Sigmoid colon (tissue), 7 donors: ENCODE measurements at regions of chr22 and their contacts with region 1.

Region 1: DNA sequence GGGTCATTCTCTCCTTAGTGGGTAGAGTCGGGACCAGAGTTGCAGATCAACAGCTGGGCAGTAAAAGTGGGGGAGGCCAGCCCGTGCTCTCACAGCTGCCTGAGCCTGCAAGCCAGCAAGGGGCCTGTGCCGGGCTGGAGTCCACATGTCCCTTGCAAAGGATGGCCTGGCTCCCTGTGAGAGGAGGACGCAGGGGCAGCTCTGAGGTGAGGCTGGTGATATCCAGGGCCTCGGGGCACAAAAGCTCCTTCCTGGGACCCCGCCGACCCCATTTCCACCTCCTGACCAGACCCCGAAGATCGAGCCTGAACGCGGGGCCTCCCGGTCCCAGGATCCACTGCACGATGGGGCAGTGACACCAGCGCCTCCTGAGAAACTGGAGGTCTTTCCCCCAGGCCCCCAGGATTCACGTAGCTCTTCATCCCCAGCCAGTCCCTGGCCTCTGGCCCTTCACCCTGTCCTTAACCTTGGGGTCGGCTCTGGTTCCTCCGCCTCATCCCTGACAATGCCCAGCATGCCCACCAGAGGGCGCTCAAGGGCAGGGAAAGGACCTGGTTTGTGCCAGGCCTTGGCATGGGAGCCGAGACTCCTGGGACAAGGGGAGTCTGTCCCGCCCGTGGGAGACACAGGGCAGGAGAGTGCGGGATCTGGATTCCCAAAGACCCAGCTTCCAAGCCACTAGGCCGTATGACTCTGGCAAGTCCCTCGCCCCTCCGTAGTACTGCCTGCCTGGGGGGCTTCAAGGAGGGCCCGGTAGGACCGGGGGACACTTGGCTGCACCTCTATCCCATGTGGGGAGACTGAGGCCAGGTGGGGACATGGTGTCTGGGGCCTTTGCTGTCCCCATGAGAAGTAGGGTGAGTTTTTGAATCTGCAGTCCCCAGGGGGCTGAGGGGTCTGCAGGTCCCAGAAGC is 17.8 kb upstream of the WNT7B start:
- DNase-seq: peak; percentile 91
- H3K4me3 ChIP-seq: no peak overlapping the region
- H3K27ac ChIP-seq: peak overlapping the region in 2 of 4 donors; percentile 85
- H3K4me1 ChIP-seq: peaks cover 0 to 50% (median 47%) of the 10 kb centered on the region in 4 donors
- H3K27me3 ChIP-seq: no peaks in the 10 kb centered on the region
- CTCF ChIP-seq: peak; percentile 95 to 99 (median 97)
- EP300 ChIP-seq: no peak
- POLR2A ChIP-seq: no peak

Region 2: DNA sequence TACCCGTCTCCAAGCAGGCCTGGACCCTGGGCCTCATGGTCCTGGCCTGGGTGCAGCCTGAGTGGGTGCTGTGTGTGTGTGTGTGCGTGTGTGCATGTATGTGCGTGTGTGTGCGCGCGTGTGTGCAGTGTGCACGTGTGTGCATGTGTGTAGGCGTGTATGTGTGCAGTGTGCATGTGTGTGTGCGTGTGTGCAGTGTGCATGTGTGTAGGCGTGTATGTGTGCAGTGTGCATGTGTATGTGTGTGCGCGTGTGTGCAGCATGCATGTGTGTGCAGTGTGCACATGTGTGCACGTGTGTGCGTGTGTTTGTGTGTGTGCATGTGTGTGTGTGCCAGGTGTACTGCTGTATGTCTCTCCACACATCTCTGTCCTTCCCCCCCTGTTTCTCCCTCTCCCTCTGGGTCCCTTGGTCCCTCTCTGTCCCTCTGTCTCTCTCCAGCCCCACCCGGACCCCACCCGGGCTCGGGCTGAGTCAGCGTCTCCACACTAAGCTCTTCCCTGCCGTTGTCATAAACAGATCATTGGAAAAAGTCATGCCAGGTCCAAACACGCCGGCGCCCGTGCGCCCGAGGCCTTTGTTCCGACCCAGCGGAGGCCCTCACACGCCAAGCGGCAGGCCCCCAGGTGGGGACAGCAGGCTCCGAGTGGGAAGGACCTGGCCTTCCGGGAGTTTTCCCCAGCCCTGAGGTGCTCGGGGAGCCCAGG is 51.8 kb before region 1 on chr22:
- intact Hi-C with region 1: no loop called
- DNase-seq: no peak
- H3K4me3 ChIP-seq: no peak overlapping the region
- H3K27ac ChIP-seq: no peak overlapping the region
- H3K4me1 ChIP-seq: no peaks in the 10 kb centered on the region
- H3K27me3 ChIP-seq: no peaks in the 10 kb centered on the region
- CTCF ChIP-seq: no peak
- EP300 ChIP-seq: no peak
- POLR2A ChIP-seq: no peak

Region 3: GRCh38 chr22:46296257-46297150 is 301.8 kb after region 1 on chr22 and contains the start of gene GTSE1:
- intact Hi-C with region 1: loop called (anchors 5 kb)
- DNase-seq: peak; percentile 99
- H3K4me3 ChIP-seq: peak within 1 kb of the TSS; percentile 35 to 62 (median 56)
- H3K27ac ChIP-seq: peak within 1 kb of the TSS; percentile 89 to 96 (median 94)
- H3K4me1 ChIP-seq: peaks cover 0 to 19% (median 16%) of the 10 kb centered on the region in 4 donors
- H3K27me3 ChIP-seq: no peaks in the 10 kb centered on the region
- CTCF ChIP-seq: no peak
- EP300 ChIP-seq: no peak
- POLR2A ChIP-seq: peak in 1 of 2 donors; percentile 33
- total RNA-seq, gene GTSE1: 0.27 to 0.36 (median 0.28) TPM in 3 of 4 donors, not detected in the other

Region 4: GRCh38 chr22:46317646-46318045 is 322.9 kb after region 1 on chr22:
- intact Hi-C with region 1: loop called (anchors 5 kb)
- DNase-seq: no peak
- H3K4me3 ChIP-seq: no peak overlapping the region
- H3K27ac ChIP-seq: no peak overlapping the region
- H3K4me1 ChIP-seq: no peaks in the 10 kb centered on the region
- H3K27me3 ChIP-seq: no peaks in the 10 kb centered on the region
- CTCF ChIP-seq: no peak
- EP300 ChIP-seq: no peak
- POLR2A ChIP-seq: no peak

Region 5: GRCh38 chr22:46542011-46542985 is 547.5 kb after region 1 on chr22:
- intact Hi-C with region 1: loop called (anchors 10 kb)
- DNase-seq: peak; percentile 78
- H3K4me3 ChIP-seq: no peak overlapping the region
- H3K27ac ChIP-seq: no peak overlapping the region
- H3K4me1 ChIP-seq: peaks cover 0 to 27% (median 24%) of the 10 kb centered on the region in 4 donors
- H3K27me3 ChIP-seq: peaks cover 11 to 29% (median 18%) of the 10 kb centered on the region in 3 donors
- CTCF ChIP-seq: peak; percentile 56 to 92 (median 88)
- EP300 ChIP-seq: no peak
- POLR2A ChIP-seq: no peak

Region 6: DNA sequence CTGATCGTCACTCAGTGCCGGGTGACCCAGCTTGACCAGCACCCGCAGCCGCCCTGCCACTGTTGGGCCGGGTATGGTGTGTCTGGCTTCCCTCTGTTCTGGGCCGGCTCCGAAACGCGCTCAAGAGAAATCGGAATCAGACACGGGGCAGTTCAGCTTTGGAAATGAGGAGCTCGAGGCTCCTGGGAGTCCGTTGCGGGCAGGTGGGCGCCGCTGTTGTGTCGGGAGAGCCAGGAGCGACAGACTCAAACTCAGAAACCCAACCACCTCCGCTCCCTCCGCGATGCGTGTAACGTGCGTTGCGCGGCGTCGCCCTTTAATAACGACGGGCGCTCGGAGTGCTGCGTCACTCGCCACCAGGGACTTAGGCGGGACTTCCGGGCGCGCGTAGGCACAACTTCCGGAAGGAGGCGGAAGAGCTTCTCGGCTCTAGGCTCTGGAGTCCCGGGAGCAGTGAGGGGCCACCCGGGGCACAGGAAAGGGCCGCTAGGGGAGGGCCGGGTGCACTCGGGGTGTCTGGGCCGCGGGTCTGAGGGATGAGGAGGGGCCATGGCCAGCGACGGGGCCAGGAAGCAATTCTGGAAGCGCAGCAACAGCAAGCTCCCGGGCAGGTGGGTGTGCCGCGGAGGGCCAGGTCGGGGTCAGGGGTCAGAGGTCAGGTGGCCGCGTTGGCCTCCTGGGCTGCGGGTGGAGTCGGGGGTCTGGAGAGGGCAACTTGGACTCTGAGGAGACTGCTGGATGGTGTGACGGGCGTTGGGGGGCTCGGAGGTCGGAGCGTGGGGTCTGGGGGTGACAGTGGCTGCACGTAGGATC is 767.7 kb after region 1 on chr22 and contains the start of gene TBC1D22A:
- intact Hi-C with region 1: loop called (anchors 10 kb)
- DNase-seq: peak; percentile 97
- H3K4me3 ChIP-seq: peak within 1 kb of the TSS; percentile 83 to 91 (median 88)
- H3K27ac ChIP-seq: peak within 1 kb of the TSS; percentile 92 to 96 (median 94)
- H3K4me1 ChIP-seq: peaks cover 0 to 24% (median 19%) of the 10 kb centered on the region in 4 donors
- H3K27me3 ChIP-seq: no peaks in the 10 kb centered on the region
- CTCF ChIP-seq: no peak
- EP300 ChIP-seq: peak in 1 of 4 donors; percentile 48
- POLR2A ChIP-seq: peak; percentile 97 to 98
- total RNA-seq, gene TBC1D22A: 13.6 to 14.3 (median 13.8) TPM